Activated naive CD4-positive, alpha-beta T cell treated with anti-CD3 and anti-CD28 coated beads for 36 hours (primary cell): ENCODE measurements at regions of chr6 and their contacts with region 1.

Region 1: DNA sequence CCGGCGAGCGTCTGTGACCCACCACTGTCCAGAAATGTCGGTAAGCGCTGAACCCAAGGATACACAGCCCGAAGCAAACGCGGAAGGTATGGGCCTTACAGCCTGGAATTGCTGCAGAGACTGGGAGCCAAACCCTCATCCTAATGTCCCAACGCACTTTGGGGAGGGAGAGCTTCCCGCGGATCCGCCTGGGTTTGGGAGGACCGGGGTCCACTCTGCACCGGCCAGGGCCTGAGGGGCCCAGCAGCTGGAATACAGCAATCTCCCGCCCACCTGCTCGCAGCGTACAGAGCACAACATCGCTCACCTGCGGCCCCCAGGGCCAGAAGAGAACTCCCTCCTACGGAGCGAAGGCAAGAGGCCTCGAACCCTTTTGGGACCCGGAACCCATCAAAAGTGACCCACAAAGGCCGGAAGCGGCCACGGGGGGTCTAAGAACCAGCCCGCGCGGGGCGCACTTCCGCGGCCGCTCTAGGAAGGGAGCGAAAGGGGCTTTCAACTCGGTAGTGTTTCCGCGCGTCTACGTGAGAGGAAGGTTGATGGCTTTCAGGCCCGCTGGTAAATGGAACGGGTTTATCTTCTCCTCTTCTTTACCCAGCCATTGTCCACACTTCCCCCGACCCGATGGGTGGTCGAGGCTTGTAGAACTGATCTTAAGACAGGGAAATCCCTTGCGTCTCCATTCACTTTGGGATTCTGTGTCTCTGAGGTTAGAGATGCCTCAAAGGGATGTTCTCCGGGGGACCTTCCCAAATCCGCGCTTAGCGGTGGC is at the start of gene ZSCAN12:
- DNase-seq: peak; percentile 90
- H3K4me3 Mint-ChIP-seq: peak within 1 kb of the TSS; percentile 91
- H3K27ac Mint-ChIP-seq: peak within 1 kb of the TSS; percentile 91
- H3K4me1 Mint-ChIP-seq: peaks cover 39% of the 10 kb centered on the region
- H3K27me3 Mint-ChIP-seq: peaks cover 20% of the 10 kb centered on the region
- total RNA-seq, gene ZSCAN12: 4.4 to 4.7 TPM

Region 2: GRCh38 chr6:27736686-27737085 is 662.9 kb before region 1 on chr6:
- CTCF ChIA-PET with region 1: no interaction called
- intact Hi-C with region 1: no loop called
- DNase-seq: no peak
- H3K4me3 Mint-ChIP-seq: no peak overlapping the region
- H3K27ac Mint-ChIP-seq: no peak overlapping the region
- H3K4me1 Mint-ChIP-seq: peaks cover 12% of the 10 kb centered on the region
- H3K27me3 Mint-ChIP-seq: peaks cover 13% of the 10 kb centered on the region

Region 3: GRCh38 chr6:28252009-28252975 is 147.2 kb before region 1 on chr6 and contains the start of gene ZKSCAN4:
- CTCF ChIA-PET with region 1: no interaction called
- intact Hi-C with region 1: loop called (anchors 1 kb)
- DNase-seq: peak; percentile 88
- H3K4me3 Mint-ChIP-seq: peak within 1 kb of the TSS; percentile 89
- H3K27ac Mint-ChIP-seq: peak within 1 kb of the TSS; percentile 83
- H3K4me1 Mint-ChIP-seq: peaks cover 23% of the 10 kb centered on the region
- H3K27me3 Mint-ChIP-seq: no peaks in the 10 kb centered on the region
- total RNA-seq, gene ZKSCAN4: 3.5 TPM

Region 4: DNA sequence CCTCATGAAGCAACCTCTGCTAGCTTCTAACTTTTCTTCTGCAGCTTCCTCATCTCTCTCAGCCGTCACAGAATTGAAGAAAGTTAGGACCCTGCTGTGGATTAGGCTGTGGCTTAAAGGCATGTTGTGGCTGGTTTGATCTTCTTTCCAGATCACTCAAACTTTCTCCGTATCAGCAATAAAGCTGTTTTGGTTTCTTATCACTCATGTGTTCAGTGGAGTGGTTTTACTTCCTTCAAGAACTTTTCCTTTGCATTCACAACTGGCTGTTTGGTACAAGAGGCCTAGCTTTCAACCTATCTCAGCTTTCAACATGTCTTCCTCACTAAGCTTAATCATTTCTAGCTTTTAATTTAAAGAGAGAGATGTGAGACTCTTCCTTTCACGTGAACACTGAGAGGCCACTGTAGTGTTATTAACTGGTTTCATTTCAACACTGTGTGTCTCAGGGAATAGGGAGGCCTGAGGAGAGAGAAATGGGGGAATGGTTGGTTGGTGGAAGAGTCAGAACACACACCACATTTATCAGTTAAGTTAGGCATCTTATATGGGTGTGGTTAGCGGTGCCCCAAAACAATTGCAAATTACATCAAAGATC is 26.5 kb after region 1 on chr6:
- CTCF ChIA-PET with region 1: no interaction called
- intact Hi-C with region 1: loop called (anchors 1 kb)
- DNase-seq: peak; percentile 29
- H3K4me3 Mint-ChIP-seq: peak overlapping the region; percentile 22
- H3K27ac Mint-ChIP-seq: peak overlapping the region; percentile 63
- H3K4me1 Mint-ChIP-seq: peaks cover 12% of the 10 kb centered on the region
- H3K27me3 Mint-ChIP-seq: peaks cover 2% of the 10 kb centered on the region

Region 5: GRCh38 chr6:28542440-28543296 is 143.1 kb after region 1 on chr6:
- CTCF ChIA-PET with region 1: interaction called, 4 read pairs
- intact Hi-C with region 1: loop called (anchors 1 kb)
- DNase-seq: peak; percentile 80
- H3K4me3 Mint-ChIP-seq: peak overlapping the region; percentile 91
- H3K27ac Mint-ChIP-seq: peak overlapping the region; percentile 80
- H3K4me1 Mint-ChIP-seq: peaks cover 27% of the 10 kb centered on the region
- H3K27me3 Mint-ChIP-seq: peaks cover 30% of the 10 kb centered on the region

Region 6: DNA sequence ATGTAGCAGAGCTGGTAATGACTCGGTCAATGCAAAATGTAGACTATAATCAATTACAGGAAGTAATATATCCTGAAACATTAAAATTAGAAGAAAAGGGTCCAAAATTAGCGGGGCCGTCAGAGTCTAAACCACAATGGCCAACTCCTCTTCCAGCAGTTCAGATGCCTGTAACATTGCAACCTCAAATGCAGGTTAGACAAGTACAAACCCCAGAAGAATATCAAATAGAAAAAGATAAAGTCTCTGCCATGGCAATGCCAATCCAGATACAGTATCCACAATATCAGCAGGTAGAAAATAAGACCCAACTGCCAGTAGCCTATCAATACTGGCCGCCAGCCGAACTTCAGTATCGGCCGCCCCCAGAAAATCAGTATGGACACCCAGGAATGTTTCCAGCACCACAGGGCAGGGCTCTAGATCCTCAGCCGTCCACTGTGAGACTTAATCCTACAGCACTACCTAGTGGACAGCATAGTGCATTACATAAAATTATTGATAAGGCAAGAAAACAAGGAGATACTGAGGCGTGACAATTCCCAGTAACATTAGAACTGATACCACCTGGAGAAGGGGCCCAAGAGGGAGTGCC is 284.5 kb after region 1 on chr6:
- CTCF ChIA-PET with region 1: no interaction called
- intact Hi-C with region 1: loop called (anchors 10 kb)
- DNase-seq: no peak
- H3K4me3 Mint-ChIP-seq: no peak overlapping the region
- H3K27ac Mint-ChIP-seq: no peak overlapping the region
- H3K4me1 Mint-ChIP-seq: peaks cover 5% of the 10 kb centered on the region
- H3K27me3 Mint-ChIP-seq: peaks cover 73% of the 10 kb centered on the region